Head of caudate nucleus (tissue), 42 donors: ENCODE measurements at regions of chr2 and their contacts with region 1.

Region 1: GRCh38 chr2:71299507-71299906 is 32.1 kb upstream of the ZNF638 start:
- DNase-seq: no peak

Region 2: GRCh38 chr2:71510196-71510807 is 210.8 kb after region 1 on chr2:
- intact Hi-C with region 1: loop called (anchors 5 kb)
- DNase-seq: peak; percentile 58 to 92 (median 80)